A549 (cell line): ENCODE measurements at regions of chr15 and their contacts with region 1.

Region 1: DNA sequence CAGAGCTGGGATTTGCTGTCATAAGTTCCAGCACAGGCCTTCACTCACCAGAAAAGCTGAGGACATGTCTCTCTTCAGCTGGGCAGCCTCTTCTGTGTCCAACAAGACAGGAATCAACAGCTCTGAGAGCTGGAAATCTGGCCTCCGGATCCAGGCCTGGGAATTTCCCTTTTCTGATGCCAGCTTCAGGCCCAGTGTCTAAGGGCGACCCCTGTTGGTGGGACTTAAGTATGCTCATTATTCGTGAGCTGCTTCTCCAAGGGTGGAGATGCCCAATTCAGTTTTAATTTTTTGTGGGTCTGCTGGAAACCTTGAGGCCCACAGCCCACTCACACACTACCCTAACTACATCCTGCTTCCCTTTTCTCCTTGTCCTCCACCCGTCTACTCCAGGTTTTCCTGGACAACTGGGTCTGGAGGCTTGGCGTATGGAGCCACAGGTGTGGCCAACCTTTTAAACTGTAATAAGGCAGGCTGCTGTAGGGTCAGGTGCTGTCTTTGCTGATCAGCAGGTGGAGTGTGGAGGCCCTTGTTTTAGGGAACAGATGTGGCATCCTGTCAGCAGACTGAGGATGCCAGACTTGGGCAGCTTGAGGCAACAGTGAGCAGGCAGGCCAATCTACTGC is 2.6 kb upstream of the CEMIP start:
- DNase-seq: peak; percentile 83 to 86
- ATAC-seq: peak in 1 of 2 experiments; percentile 31; a peak in 3 of 6 replicates
- H3K4me3 ChIP-seq: no peak overlapping the region
- H3K27ac ChIP-seq: 0 out of 6 replicates have a peak overlapping the region, but pooled peaks of 1 of the 2 experiments have one; percentile 42
- H3K4me1 ChIP-seq: peaks cover 12% of the 10 kb centered on the region; the same call in 2 of the 3 replicates
- CTCF ChIP-seq: peak; percentile 97
- EP300 ChIP-seq: no peak
- POLR2A ChIP-seq: no peak
- RAD21 ChIP-seq: peak; percentile 93 to 98

Region 2: GRCh38 chr15:80461356-80462095 is 315.0 kb before region 1 on chr15:
- CTCF ChIA-PET with region 1: interaction called, 228 read pairs
- POLR2A ChIA-PET with region 1: no interaction called
- DNase-seq: no peak
- ATAC-seq: no peak
- H3K4me3 ChIP-seq: no peak overlapping the region
- H3K27ac ChIP-seq: no peak overlapping the region
- H3K4me1 ChIP-seq: peaks cover 5% of the 10 kb centered on the region
- CTCF ChIP-seq: no peak
- EP300 ChIP-seq: no peak
- POLR2A ChIP-seq: no peak
- RAD21 ChIP-seq: no peak

Region 3: DNA sequence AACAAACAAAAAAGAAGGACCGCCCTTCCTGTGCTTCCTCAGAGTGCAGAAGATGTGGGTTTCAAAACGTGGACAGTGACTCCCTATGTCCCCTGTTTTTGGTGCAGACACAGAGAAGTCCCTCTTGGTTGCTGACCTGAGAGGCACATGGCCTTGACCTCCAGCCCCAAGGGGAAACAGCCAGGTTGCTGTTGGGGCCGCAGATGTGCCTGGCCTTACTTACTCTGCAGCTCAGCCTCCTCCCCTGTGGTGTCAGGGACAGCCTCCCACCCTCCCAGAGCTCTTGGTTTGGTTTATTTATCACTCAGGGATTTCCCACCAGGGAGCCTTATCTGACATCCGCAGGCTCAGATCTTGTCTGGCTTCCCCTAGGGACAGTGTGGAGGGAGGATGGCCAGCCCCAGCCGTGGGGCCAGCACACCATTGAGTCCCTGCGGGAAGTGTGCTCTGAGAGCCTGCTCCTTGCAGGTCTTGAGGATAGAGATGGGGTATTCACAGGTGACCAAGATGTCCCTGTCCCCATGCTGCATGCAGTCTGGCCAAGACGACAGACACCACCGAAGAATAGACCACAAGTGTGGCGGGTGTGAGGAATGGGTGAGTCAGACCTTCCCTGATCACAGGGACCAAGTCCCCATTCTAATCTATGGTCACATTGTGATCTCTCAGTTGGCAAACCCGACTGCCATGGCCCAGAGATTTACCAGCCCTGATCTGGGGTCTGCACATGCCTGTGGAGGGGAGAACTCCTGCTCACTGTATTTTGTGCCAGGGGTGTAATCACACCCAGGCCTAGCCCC is 215.7 kb before region 1 on chr15:
- CTCF ChIA-PET with region 1: interaction called, 362 read pairs
- POLR2A ChIA-PET with region 1: no interaction called
- DNase-seq: no peak
- ATAC-seq: no peak
- H3K4me3 ChIP-seq: no peak overlapping the region
- H3K27ac ChIP-seq: no peak overlapping the region
- H3K4me1 ChIP-seq: no peaks in the 10 kb centered on the region
- CTCF ChIP-seq: no peak
- EP300 ChIP-seq: no peak
- POLR2A ChIP-seq: no peak
- RAD21 ChIP-seq: no peak

Region 4: GRCh38 chr15:80619680-80620079 is 156.9 kb before region 1 on chr15:
- CTCF ChIA-PET with region 1: interaction called, 20 read pairs
- POLR2A ChIA-PET with region 1: no interaction called
- DNase-seq: no peak
- ATAC-seq: peak; percentile 20 to 65; a peak in 4 of 6 replicates
- H3K4me3 ChIP-seq: no peak overlapping the region
- H3K27ac ChIP-seq: no peak overlapping the region
- H3K4me1 ChIP-seq: peaks cover 11% of the 10 kb centered on the region; the same call in 2 of the 3 replicates
- CTCF ChIP-seq: no peak; the same call in 2 of the 3 replicates
- EP300 ChIP-seq: no peak
- POLR2A ChIP-seq: no peak
- RAD21 ChIP-seq: 0 out of 5 replicates have a peak, but pooled peaks of 1 of the 2 experiments have one; percentile 13

Region 5: GRCh38 chr15:80669663-80670273 is 106.8 kb before region 1 on chr15:
- CTCF ChIA-PET with region 1: interaction called, 15 read pairs
- POLR2A ChIA-PET with region 1: no interaction called
- DNase-seq: no peak
- ATAC-seq: no peak
- H3K4me3 ChIP-seq: no peak overlapping the region
- H3K27ac ChIP-seq: no peak overlapping the region
- H3K4me1 ChIP-seq: peaks cover 9% of the 10 kb centered on the region; the same call in 2 of the 3 replicates
- CTCF ChIP-seq: no peak
- EP300 ChIP-seq: no peak
- POLR2A ChIP-seq: no peak
- RAD21 ChIP-seq: no peak

Region 6: DNA sequence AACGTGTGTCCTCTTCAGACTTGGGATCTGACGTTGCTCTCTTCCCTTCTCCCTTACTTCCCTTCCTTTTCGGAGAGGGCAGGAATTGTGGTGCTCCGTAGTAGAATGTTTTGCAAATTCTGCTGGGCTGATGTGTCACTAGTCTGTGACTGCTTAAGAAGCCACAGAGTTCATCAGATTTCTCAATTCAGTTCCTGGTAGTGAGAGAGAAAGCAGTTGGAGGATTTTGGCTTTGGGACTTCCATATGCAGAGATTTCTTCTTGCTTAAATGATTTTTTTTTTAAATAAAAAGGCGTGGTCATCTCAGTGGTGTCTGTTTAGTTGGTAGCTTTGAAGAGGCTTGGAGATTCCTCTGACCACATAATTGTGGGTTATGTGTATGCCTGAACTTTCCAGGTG is 12.8 kb after region 1 on chr15:
- CTCF ChIA-PET with region 1: interaction called, 35 read pairs
- POLR2A ChIA-PET with region 1: no interaction called
- DNase-seq: no peak
- ATAC-seq: no peak
- H3K4me3 ChIP-seq: no peak overlapping the region
- H3K27ac ChIP-seq: no peak overlapping the region
- H3K4me1 ChIP-seq: no peaks in the 10 kb centered on the region
- CTCF ChIP-seq: no peak
- EP300 ChIP-seq: no peak
- POLR2A ChIP-seq: no peak
- RAD21 ChIP-seq: no peak

Region 7: GRCh38 chr15:80970018-80970658 is 193.6 kb after region 1 on chr15:
- CTCF ChIA-PET with region 1: interaction called, 235 read pairs
- POLR2A ChIA-PET with region 1: no interaction called
- DNase-seq: peak; percentile 59 to 79
- ATAC-seq: peak; percentile 83 to 93
- H3K4me3 ChIP-seq: no peak overlapping the region
- H3K27ac ChIP-seq: no peak overlapping the region
- H3K4me1 ChIP-seq: no peaks in the 10 kb centered on the region
- CTCF ChIP-seq: peak; percentile 98
- EP300 ChIP-seq: no peak
- POLR2A ChIP-seq: no peak
- RAD21 ChIP-seq: peak; percentile 98 to 99